ENCODE measurements at regions of chr9 and their contacts with region 1.

Region 1: GRCh38 chr9:84261082-84261746 is 79.3 kb downstream of the SLC28A3 start:
- DNase-seq: peak; percentile 80
- H3K4me3 ChIP-seq: no peak overlapping the region
- H3K27ac ChIP-seq: no peak overlapping the region
- H3K4me1 ChIP-seq: no peaks in the 10 kb centered on the region
- H3K27me3 ChIP-seq: peaks cover 10 to 24% of the 10 kb centered on the region in 2 experiments
- CTCF ChIP-seq: peak; percentile 83 to 89
- POLR2A ChIP-seq: no peak

Region 2: GRCh38 chr9:83937911-83938323 is 323.3 kb before region 1 on chr9:
- CTCF ChIA-PET with region 1: interaction called, 110 read pairs
- POLR2A ChIA-PET with region 1: no interaction called
- dilution Hi-C with region 1: no loop called
- intact Hi-C with region 1: loop called (anchors 1 kb)
- DNase-seq: peak; percentile 70
- H3K4me3 ChIP-seq: no peak overlapping the region
- H3K27ac ChIP-seq: no peak overlapping the region
- H3K4me1 ChIP-seq: peaks cover 7% of the 10 kb centered on the region
- H3K27me3 ChIP-seq: no peaks in the 10 kb centered on the region
- CTCF ChIP-seq: peak; percentile 48 to 49
- POLR2A ChIP-seq: no peak

Region 3: DNA sequence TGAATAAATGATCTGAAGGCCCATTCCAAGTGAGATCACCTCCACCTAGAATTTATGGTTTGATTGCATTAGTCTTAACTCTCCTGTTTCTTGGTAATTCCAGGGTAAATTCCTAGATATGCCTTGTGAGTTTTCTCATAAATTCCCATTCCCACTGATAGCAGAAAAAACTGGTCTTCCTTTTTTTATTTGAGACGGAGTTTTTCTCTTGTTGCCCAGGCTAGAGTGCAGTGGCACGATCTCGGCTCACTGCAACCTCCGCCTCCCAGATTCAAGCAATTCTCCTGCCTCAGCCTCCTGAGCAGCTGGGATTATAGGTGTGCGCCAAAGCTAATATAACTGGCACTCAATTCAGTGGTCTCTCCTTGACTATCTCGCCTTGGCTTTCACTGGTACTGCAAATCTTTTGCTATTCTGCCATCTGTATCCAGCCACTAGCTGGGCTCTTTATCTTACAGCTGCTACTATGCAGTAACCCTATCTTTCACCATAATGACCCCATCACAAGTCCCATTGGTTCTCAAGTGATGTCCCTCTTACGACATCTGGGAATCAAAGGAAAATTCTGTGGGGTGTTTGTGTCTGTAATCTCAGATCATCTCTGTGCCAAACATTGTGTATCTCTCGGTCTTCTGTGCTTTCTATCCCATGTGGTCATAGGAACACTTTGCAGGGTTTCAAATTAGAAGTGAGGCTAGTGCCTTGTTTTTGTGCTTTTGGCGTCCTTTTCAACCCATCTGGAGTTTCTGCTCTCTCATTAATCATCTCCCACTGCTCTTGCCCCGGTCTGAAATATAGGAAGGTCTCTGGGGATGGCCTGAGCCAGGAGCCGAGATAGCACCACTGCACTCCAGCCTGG is 295.6 kb before region 1 on chr9:
- CTCF ChIA-PET with region 1: interaction called, 26 read pairs
- POLR2A ChIA-PET with region 1: no interaction called
- dilution Hi-C with region 1: no loop called
- intact Hi-C with region 1: no loop called
- DNase-seq: no peak
- H3K4me3 ChIP-seq: no peak overlapping the region
- H3K27ac ChIP-seq: no peak overlapping the region
- H3K4me1 ChIP-seq: no peaks in the 10 kb centered on the region
- H3K27me3 ChIP-seq: no peaks in the 10 kb centered on the region
- CTCF ChIP-seq: no peak
- POLR2A ChIP-seq: peak; percentile 68

Region 4: DNA sequence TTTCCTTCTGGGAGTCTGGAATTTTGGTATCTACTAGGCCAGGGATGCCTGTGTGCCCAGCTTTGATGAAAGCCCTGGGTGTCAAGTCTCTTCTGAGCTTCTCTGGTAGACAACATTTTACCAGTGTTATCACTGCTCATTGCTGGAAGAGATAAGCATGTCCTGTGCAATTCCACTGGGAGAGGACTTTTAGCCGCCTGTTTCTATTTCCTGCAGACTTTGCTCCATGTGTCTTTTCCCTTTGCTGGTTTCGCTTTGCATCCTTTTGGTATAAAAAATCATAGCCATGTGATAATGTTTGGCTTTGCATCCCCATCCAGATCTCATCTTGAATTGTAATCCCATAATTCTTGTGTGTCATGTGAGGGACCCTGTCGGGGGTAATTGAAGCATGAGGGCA is 83.8 kb before region 1 on chr9:
- CTCF ChIA-PET with region 1: interaction called, 9 read pairs
- POLR2A ChIA-PET with region 1: no interaction called
- dilution Hi-C with region 1: no loop called
- intact Hi-C with region 1: loop called (anchors 5 kb)
- DNase-seq: no peak
- H3K4me3 ChIP-seq: no peak overlapping the region
- H3K27ac ChIP-seq: no peak overlapping the region
- H3K4me1 ChIP-seq: no peaks in the 10 kb centered on the region
- H3K27me3 ChIP-seq: peaks cover 0 to 2% of the 10 kb centered on the region in 2 experiments
- CTCF ChIP-seq: no peak
- POLR2A ChIP-seq: no peak

Measured in endothelial cell of umbilical vein (primary cell).